Activated CD8-positive, alpha-beta T cell treated with anti-CD3 and anti-CD28 coated beads for 36 hours (primary cell): ENCODE measurements at regions of chr4 and their contacts with region 1.

Region 1: GRCh38 chr4:81069706-81070331 is 39.3 kb downstream of the BMP3 start:
- DNase-seq: peak; percentile 75
- ATAC-seq: peak; percentile 74
- H3K4me3 Mint-ChIP-seq: no peak overlapping the region
- H3K27ac Mint-ChIP-seq: no peak overlapping the region
- H3K4me1 Mint-ChIP-seq: no peaks in the 10 kb centered on the region
- H3K27me3 Mint-ChIP-seq: peaks cover 14% of the 10 kb centered on the region
- CTCF ChIP-seq: peak; percentile 85

Region 2: DNA sequence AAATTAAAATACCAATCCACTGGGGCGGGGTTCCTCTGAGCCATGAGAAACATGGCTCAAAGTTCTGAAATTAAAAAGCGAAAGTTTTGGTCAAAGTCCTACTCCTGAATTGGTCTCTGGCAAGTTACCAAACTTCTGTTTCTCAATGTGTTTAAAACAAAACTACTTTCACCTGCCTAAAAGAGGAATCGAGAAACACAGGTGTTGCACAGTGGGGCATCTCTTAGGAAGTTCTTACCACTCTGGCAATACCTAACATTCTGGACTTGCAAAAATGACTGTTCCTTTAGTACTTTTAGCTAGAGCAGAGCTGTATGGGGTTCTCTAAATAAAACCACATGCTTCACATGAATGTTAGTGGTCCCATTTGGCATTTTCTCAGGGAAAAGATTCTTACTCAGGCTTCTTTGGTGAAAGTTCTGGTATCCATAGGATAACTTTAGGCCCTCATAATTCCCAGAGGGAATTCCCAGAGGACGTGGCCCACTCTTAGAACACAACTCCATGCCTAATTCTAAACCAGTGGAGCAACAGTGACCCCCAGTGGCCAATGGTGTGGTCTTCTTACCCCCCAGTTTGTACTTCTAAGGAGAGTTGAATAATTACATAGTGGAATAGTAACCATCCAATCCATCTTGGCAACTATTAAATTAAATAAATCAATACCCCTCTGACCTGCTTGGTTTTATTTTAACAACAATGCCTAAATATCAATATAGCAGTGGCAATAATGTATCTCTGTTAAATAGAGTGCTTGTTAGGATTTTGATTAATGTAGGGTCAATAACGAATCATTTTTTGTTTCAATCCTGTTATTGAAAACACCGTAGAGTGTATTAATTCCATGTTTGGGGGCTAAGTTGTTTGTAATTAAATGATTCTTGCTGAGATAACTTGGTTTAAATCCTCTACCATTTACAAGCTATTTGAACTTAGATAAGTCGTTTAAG is 17.4 kb before region 1 on chr4:
- CTCF ChIA-PET with region 1: interaction called, 14 read pairs
- POLR2A ChIA-PET with region 1: no interaction called
- intact Hi-C with region 1: no loop called
- DNase-seq: peak; percentile 63
- ATAC-seq: no peak
- H3K4me3 Mint-ChIP-seq: no peak overlapping the region
- H3K27ac Mint-ChIP-seq: no peak overlapping the region
- H3K4me1 Mint-ChIP-seq: no peaks in the 10 kb centered on the region
- H3K27me3 Mint-ChIP-seq: no peaks in the 10 kb centered on the region
- CTCF ChIP-seq: peak; percentile 74

Region 3: GRCh38 chr4:81084029-81084428 is 14.2 kb after region 1 on chr4:
- CTCF ChIA-PET with region 1: interaction called, 26 read pairs
- POLR2A ChIA-PET with region 1: no interaction called
- intact Hi-C with region 1: no loop called
- DNase-seq: no peak
- ATAC-seq: no peak
- H3K4me3 Mint-ChIP-seq: no peak overlapping the region
- H3K27ac Mint-ChIP-seq: no peak overlapping the region
- H3K4me1 Mint-ChIP-seq: no peaks in the 10 kb centered on the region
- H3K27me3 Mint-ChIP-seq: no peaks in the 10 kb centered on the region
- CTCF ChIP-seq: no peak

Region 4: DNA sequence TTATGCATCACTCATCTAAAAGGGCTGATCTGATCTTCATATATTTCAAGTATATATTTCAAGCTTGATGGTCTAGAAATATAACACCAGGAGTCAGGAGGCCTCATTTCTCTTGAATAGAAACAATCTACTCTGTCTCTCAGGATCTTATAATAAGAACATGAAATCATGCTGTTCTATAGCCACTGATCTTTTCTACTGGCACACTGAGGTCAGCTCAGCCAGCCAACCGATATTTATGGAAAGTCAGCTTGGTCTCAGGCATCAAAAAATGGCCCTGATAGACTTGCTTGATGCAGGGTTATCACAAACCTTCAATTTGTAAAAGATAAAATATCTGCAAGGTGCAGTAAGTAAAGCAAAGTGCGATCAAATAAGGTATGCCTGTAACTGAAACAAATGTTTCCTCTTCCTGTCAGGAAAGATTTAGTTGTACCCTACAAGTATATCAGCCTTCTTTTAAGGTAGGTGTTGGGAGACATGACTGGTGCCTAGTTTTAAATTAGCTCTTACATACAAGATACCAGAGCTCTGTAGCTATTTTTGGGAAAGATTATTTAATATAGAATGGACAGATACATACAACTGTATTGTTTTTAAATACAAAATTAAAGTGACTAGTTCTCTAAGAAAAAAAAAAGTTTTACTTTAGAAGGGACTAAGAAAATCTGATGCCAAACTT is 24.0 kb after region 1 on chr4:
- CTCF ChIA-PET with region 1: interaction called, 10 read pairs
- POLR2A ChIA-PET with region 1: no interaction called
- intact Hi-C with region 1: no loop called
- DNase-seq: no peak
- ATAC-seq: no peak
- H3K4me3 Mint-ChIP-seq: no peak overlapping the region
- H3K27ac Mint-ChIP-seq: no peak overlapping the region
- H3K4me1 Mint-ChIP-seq: no peaks in the 10 kb centered on the region
- H3K27me3 Mint-ChIP-seq: peaks cover 2% of the 10 kb centered on the region
- CTCF ChIP-seq: no peak

Region 5: DNA sequence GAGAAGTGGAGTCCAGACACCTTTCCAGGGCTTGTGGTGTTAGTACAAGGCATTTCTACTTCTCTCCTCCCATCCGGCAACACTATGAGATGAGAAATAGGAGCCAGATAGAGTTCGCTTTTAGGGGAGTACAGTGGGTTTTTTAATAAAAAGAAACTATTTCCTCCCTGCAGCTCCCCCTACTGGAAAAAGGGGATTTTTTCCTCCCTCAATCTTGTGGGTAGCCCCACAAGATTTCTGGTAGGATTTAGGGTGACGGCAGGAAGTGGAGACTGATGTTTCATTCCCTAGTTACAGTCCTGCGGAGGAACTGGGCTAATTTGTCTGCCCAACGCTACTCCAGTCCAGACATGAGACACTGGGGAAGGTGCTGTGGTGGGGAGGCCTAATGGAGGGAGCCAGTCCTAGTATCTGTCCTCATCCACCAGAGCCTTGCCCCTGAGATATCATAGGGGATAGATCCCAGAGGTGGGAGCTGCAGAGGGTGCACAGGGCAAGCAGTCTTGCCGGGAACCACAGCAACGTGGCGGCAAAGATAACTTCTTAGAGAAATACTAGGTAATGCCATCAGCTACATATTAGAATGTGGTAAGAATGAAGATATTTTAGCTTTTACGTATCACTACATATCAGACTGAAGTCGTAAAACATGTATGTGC is 190.8 kb after region 1 on chr4:
- CTCF ChIA-PET with region 1: interaction called, 20 read pairs
- POLR2A ChIA-PET with region 1: no interaction called
- intact Hi-C with region 1: no loop called
- DNase-seq: no peak
- ATAC-seq: no peak
- H3K4me3 Mint-ChIP-seq: no peak overlapping the region
- H3K27ac Mint-ChIP-seq: no peak overlapping the region
- H3K4me1 Mint-ChIP-seq: no peaks in the 10 kb centered on the region
- H3K27me3 Mint-ChIP-seq: peaks cover 2% of the 10 kb centered on the region
- CTCF ChIP-seq: no peak

Region 6: DNA sequence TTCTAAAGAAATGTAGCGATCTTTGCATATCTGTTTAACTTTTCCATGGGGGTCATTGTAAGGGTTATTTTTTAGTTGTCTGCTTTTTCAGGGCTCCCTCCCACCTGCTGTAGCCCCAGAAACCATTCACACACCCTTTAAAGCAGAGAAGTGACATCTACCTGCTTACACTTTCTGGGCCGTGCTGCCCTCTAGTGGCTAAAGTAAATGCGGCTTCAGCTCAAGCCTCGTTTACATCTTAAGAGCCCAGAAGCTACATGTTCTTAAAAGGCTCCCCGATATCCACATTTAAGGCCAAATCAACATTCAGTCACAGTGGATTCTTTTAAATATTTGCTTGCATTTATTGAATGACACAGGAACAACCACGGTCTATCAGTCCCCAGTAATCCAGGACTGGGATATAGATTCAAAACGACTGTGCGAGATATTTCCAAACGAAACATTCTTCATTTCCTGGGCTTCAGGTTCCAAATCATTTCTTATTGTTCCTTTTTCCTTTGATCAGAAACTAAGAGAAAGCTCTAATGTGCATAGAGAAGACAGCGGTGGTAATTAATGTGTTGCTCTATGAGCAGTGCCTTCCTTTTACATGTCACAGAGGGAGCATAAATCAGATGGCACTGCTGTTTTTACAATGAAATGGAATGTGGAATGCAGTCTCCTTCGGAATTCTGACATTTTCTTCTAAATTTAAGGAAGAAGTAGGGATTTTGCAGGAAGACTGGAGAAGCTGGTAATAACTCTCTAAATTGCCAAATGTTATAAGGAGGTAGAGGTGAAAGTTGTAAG is 282.0 kb after region 1 on chr4:
- CTCF ChIA-PET with region 1: interaction called, 56 read pairs
- POLR2A ChIA-PET with region 1: no interaction called
- intact Hi-C with region 1: loop called (anchors 1 kb)
- DNase-seq: peak; percentile 83
- ATAC-seq: no peak
- H3K4me3 Mint-ChIP-seq: no peak overlapping the region
- H3K27ac Mint-ChIP-seq: no peak overlapping the region
- H3K4me1 Mint-ChIP-seq: no peaks in the 10 kb centered on the region
- H3K27me3 Mint-ChIP-seq: peaks cover 8% of the 10 kb centered on the region
- CTCF ChIP-seq: peak; percentile 90